ENCODE measurements at regions of chr7 and their contacts with region 1.

Region 1: DNA sequence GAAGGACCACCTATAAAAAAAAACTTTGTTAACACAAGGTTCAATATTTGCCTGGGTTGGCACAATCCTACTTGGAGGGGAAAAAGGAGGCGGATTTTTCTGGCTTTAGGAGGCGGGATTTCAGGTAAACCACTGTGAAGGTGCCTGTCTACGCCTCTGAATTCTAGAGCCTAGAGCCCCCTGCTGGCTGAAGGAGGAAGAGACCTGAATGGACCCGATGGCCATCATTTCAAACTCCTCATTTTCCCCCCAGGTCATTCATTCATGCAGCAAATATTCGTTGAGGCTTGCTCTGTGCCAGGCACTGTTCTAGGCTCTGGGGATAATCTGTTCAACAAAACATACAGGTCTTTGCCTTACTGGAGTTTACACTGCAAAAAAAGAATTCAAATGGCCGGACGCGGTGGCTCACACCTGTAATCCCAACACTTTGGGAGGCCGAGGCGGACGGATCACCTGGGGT is 90.3 kb upstream of the NFE2L3 start:
- DNase-seq: peak; percentile 62
- ATAC-seq: peak; percentile 87
- H3K4me3 ChIP-seq: no peak overlapping the region
- H3K27ac ChIP-seq: no peak overlapping the region
- H3K4me1 ChIP-seq: no peaks in the 10 kb centered on the region
- H3K27me3 ChIP-seq: peaks cover 0 to 4% of the 10 kb centered on the region in 2 experiments; a peak in 1 of 5 replicates
- CTCF ChIP-seq: peak; percentile 80
- EP300 ChIP-seq: no peak
- POLR2A ChIP-seq: no peak
- RAD21 ChIP-seq: peak; percentile 77; the same call in 1 of the 2 replicates

Region 2: GRCh38 chr7:25894902-25895791 is 166.6 kb before region 1 on chr7:
- CTCF ChIA-PET with region 1: interaction called, 54 read pairs
- POLR2A ChIA-PET with region 1: no interaction called
- in situ Hi-C with region 1: loop called (anchors 5 kb)
- intact Hi-C with region 1: loop called (anchors 1 kb)
- DNase-seq: no peak
- ATAC-seq: peak; percentile 76
- H3K4me3 ChIP-seq: no peak overlapping the region; a peak in 1 of 6 replicates
- H3K27ac ChIP-seq: no peak overlapping the region
- H3K4me1 ChIP-seq: peaks cover 21% of the 10 kb centered on the region
- H3K27me3 ChIP-seq: peaks cover 0 to under 1% of the 10 kb centered on the region in 2 experiments; a peak in 1 of 5 replicates
- CTCF ChIP-seq: peak; percentile 60
- EP300 ChIP-seq: no peak
- POLR2A ChIP-seq: no peak
- RAD21 ChIP-seq: 0 out of 2 replicates have a peak, but pooled peaks have one; percentile 10

Region 3: DNA sequence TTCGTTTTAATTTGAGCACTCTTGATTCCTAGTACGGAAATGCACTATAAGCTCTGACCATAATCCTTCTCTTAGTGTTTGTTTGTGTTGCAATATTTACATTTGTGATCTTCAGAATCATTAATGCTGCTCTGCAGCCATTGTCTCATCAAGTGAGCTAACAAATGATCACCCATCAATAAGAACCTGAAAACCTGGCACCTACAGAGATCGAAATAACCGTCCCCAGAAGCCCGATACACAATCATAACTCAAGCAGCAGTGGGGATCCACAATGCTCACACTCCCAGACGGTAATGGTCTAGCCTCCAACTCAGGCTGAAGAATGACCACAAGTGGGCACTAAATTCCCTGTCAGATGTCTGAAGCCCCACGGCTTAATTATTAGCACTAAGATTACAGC is 65.7 kb before region 1 on chr7:
- CTCF ChIA-PET with region 1: no interaction called
- POLR2A ChIA-PET with region 1: no interaction called
- in situ Hi-C with region 1: no loop called
- intact Hi-C with region 1: loop called (anchors 1 kb)
- DNase-seq: peak; percentile 32
- ATAC-seq: peak; percentile 82
- H3K4me3 ChIP-seq: no peak overlapping the region
- H3K27ac ChIP-seq: no peak overlapping the region
- H3K4me1 ChIP-seq: peaks cover 24% of the 10 kb centered on the region
- H3K27me3 ChIP-seq: no peaks in the 10 kb centered on the region
- CTCF ChIP-seq: peak; percentile 42
- EP300 ChIP-seq: no peak
- POLR2A ChIP-seq: no peak
- RAD21 ChIP-seq: peak; percentile 21; the same call in 1 of the 2 replicates